ENCODE measurements at regions of chr1 and their contacts with region 1.

Region 1: GRCh38 chr1:209657140-209657879 is 5.1 kb upstream of the LAMB3 start:
- DNase-seq: no peak
- H3K4me3 ChIP-seq: no peak overlapping the region
- H3K27ac ChIP-seq: no peak overlapping the region
- H3K4me1 ChIP-seq: peaks cover 6 to 44% (median 17%) of the 10 kb centered on the region in 4 donors
- H3K27me3 ChIP-seq: no peaks in the 10 kb centered on the region
- CTCF ChIP-seq: no peak
- EP300 ChIP-seq: no peak
- POLR2A ChIP-seq: no peak

Region 2: DNA sequence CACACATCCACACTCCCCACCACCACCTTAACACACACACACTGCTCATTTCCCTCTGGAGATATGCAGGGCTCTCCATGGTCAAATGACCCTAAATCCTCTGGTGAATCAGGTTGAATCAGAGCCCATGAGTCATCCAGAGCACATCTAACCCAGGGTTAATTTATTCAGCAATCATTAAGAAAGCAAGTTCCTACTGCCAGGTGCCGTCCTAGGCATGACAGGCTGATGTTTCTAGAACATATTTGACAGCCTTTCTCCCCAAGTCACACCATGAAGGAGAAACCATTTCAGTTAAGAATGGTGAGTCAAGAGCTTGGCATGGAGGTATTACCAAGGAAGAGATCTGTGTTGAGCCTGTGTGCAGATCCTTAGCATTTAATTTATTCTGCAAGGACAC is 268.1 kb before region 1 on chr1:
- in situ Hi-C with region 1: no loop called
- intact Hi-C with region 1: no loop called
- DNase-seq: no peak
- H3K4me3 ChIP-seq: no peak overlapping the region
- H3K27ac ChIP-seq: no peak overlapping the region
- H3K4me1 ChIP-seq: no peaks in the 10 kb centered on the region
- H3K27me3 ChIP-seq: no peaks in the 10 kb centered on the region
- CTCF ChIP-seq: no peak
- EP300 ChIP-seq: no peak
- POLR2A ChIP-seq: no peak

Region 3: GRCh38 chr1:209537336-209538114 is 119.8 kb before region 1 on chr1:
- in situ Hi-C with region 1: no loop called
- intact Hi-C with region 1: loop called (anchors 1 kb)
- DNase-seq: no peak
- H3K4me3 ChIP-seq: no peak overlapping the region
- H3K27ac ChIP-seq: no peak overlapping the region
- H3K4me1 ChIP-seq: no peaks in the 10 kb centered on the region
- H3K27me3 ChIP-seq: peaks cover 8% of the 10 kb centered on the region
- CTCF ChIP-seq: no peak
- EP300 ChIP-seq: no peak
- POLR2A ChIP-seq: no peak

Region 4: DNA sequence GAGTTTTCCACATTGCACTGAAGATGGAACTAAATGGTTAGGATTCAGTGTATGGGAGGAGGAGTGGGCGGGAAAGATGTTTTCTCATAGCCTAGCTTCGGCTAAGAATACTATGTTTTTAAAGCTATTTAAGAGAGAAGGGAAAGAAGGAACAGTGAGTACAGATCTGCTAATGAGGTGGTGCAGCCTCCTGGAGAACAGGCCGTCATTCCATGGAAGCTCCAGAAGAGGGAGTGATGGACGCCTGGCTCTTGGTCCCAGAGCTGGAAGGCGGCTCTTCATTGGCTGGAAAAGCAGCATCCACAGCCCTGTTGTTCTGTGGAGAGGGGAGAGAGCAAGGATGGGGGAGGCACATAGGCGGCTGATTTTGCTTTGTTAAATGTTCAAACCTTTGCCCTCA is 66.9 kb before region 1 on chr1:
- in situ Hi-C with region 1: no loop called
- intact Hi-C with region 1: no loop called
- DNase-seq: no peak
- H3K4me3 ChIP-seq: no peak overlapping the region
- H3K27ac ChIP-seq: no peak overlapping the region
- H3K4me1 ChIP-seq: peaks cover 0 to 7% (median 5%) of the 10 kb centered on the region in 4 donors
- H3K27me3 ChIP-seq: peaks cover 12% of the 10 kb centered on the region
- CTCF ChIP-seq: peak in 2 of 5 experiments; percentile 16 to 20
- EP300 ChIP-seq: no peak
- POLR2A ChIP-seq: no peak

Region 5: GRCh38 chr1:209627732-209628196 is 29.5 kb before region 1 on chr1:
- in situ Hi-C with region 1: no loop called
- intact Hi-C with region 1: no loop called
- DNase-seq: peak; percentile 73
- H3K4me3 ChIP-seq: no peak overlapping the region
- H3K27ac ChIP-seq: no peak overlapping the region
- H3K4me1 ChIP-seq: peaks cover 0 to 4% (median 0%) of the 10 kb centered on the region in 4 donors
- H3K27me3 ChIP-seq: no peaks in the 10 kb centered on the region
- CTCF ChIP-seq: peak; percentile 83 to 97 (median 93)
- EP300 ChIP-seq: no peak
- POLR2A ChIP-seq: no peak

Measured in transverse colon (tissue), 4 donors.